Stomach (tissue), 19 donors: ENCODE measurements at regions of chr16 and their contacts with region 1.

Region 1: DNA sequence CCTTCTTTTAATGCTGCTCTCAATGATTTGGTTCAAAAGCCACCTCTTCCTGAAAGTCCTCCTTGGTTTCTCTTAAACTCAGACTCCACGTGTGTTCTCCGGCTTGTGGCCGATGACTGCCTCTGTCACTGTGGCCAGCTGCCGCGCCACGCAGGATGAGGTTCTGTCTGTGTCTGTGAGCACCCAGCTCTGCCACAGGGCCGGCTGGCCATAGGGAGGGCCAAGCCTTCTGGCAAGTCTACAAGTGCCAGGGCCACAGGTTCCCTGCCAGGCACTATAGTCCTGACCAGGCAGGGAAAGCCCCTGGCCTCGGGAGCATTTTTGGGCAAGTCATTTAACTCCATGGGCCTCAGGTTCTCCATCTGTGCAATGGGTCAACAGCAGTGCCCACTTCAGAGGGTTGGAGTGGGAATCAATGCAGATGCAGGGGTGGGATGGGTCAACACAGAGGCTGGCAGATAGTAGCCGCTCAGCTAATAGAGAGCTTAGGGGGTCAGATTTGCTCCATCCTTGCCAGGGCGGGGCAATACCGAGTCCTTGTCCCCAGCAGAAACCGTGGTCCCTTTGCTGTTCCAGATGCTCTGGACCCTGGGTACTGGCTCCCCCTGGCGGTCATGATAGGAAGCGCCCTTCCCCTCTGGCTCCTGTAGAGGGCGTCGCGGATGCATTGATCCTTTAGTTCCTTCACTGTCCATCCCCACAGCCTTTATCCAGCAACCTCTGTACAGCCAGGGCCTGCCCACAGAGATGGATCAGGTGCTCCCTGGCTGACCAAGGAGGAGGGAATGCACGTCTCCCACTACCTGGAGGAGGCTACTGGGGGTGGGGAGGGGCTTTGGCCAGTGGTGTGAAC is 19.3 kb upstream of the ADGRG3 start:
- DNase-seq: peak; percentile 88 to 90
- H3K4me3 ChIP-seq: no peak overlapping the region
- H3K27ac ChIP-seq: peak overlapping the region; percentile 53 to 77 (median 71)
- H3K4me1 ChIP-seq: peaks cover 13 to 46% (median 26%) of the 10 kb centered on the region in 4 donors
- H3K27me3 ChIP-seq: peaks cover 0 to 35% (median 0%) of the 10 kb centered on the region in 3 donors
- CTCF ChIP-seq: peak; percentile 94 to 100 (median 100)
- EP300 ChIP-seq: no peak
- POLR2A ChIP-seq: no peak

Region 2: DNA sequence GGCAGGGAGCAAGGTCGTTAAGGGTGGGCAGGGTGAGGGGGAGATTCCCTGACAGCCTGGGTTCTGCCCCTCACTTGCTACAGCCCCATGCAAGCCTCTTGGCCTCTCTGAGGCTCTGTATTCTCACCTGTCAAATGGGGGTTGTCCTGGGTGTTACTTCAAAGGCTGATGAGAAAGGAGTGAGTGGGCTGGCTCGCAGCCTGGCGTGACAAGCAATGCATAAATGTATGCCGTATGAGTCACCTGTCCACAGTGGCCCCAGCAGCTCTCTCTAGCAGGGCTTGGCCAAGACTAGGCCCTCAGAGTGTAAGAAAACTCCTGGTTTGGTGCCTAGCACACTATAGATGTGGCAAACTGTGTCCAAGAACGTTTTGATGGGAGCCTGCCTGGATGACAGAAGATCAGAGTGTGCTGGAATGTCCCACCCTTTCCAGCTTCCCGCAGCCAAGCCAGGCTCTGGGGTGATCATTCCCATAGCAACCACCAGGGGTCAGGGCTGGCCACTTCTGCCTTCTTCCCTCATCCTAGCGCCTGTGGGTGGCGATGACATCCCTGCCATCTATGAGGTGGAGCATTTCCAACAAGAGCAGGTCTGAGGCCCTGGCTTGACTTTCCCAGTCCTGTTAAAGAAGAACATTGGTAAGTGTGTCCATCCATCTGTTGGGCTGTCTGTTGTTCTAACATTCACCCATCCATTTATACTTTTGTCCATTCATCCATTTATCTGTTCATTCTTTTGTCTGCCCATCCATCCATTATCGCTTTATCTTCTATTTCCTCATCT is 57.5 kb before region 1 on chr16:
- intact Hi-C with region 1: loop called (anchors 5 kb)
- DNase-seq: peak; percentile 81 to 89
- H3K4me3 ChIP-seq: no peak overlapping the region
- H3K27ac ChIP-seq: peak overlapping the region in 4 of 5 donors; percentile 30 to 67 (median 58)
- H3K4me1 ChIP-seq: peaks cover 8 to 32% (median 12%) of the 10 kb centered on the region in 4 donors
- H3K27me3 ChIP-seq: peaks cover 0 to 8% (median 0%) of the 10 kb centered on the region in 3 donors
- CTCF ChIP-seq: peak in 5 of 7 experiments; percentile 78 to 96 (median 87)
- EP300 ChIP-seq: no peak
- POLR2A ChIP-seq: no peak